WTC11 (cell line): ENCODE measurements at regions of chr15 and their contacts with region 1.

Region 1: GRCh38 chr15:81265944-81266775 is 57.8 kb downstream of the STARD5 start:
- DNase-seq: peak; percentile 90
- ATAC-seq: peak; percentile 93
- H3K4me3 Mint-ChIP-seq: peak overlapping the region; percentile 58
- H3K27ac Mint-ChIP-seq: no peak overlapping the region
- H3K4me1 Mint-ChIP-seq: peaks cover 13% of the 10 kb centered on the region
- H3K27me3 Mint-ChIP-seq: no peaks in the 10 kb centered on the region
- CTCF ChIP-seq: peak; percentile 78

Region 2: DNA sequence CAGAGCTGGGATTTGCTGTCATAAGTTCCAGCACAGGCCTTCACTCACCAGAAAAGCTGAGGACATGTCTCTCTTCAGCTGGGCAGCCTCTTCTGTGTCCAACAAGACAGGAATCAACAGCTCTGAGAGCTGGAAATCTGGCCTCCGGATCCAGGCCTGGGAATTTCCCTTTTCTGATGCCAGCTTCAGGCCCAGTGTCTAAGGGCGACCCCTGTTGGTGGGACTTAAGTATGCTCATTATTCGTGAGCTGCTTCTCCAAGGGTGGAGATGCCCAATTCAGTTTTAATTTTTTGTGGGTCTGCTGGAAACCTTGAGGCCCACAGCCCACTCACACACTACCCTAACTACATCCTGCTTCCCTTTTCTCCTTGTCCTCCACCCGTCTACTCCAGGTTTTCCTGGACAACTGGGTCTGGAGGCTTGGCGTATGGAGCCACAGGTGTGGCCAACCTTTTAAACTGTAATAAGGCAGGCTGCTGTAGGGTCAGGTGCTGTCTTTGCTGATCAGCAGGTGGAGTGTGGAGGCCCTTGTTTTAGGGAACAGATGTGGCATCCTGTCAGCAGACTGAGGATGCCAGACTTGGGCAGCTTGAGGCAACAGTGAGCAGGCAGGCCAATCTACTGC is 489.6 kb before region 1 on chr15:
- CTCF ChIA-PET with region 1: interaction called, 11 read pairs
- POLR2A ChIA-PET with region 1: no interaction called
- DNase-seq: peak; percentile 75
- ATAC-seq: no peak
- H3K4me3 Mint-ChIP-seq: no peak overlapping the region
- H3K27ac Mint-ChIP-seq: no peak overlapping the region
- H3K4me1 Mint-ChIP-seq: peaks cover 11% of the 10 kb centered on the region
- H3K27me3 Mint-ChIP-seq: peaks cover 39% of the 10 kb centered on the region
- CTCF ChIP-seq: peak; percentile 83

Region 3: DNA sequence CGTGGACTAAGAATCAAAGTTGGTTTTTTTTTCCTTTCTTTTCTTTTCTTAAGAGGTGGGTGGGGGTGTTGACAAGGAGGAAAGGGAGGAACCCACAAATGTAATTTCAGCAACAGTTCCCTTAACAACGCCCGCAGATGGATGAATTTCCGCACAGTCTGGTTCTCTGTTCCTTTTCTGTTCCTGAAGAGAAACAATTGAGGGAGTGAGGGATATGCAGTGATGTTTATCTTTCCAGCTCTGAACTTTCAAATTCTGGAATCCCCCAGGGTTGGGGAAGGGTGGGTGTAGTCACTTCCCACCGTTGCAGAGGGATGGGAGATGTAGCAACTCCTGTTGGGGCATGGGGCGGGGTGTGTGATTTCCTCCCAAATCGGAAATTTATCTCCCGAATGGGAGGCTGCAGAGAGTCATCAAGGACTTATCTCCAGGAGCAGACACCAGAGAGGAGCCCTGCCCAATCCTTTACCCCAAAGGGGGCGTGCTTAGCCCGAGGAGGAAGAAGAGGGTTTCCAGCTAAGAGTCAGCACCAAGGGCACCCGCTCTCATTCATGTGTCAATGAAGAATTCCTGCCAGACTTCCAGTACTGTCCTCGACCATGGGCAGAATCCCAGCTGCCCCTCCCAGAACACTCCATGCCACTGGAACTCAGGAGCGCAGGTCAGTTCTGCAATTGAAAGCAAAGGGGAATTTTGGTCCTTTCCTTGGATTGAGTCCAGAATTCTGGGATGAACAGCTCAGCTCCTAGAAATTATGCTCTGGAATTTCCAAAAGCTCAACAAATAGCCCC is 167.1 kb before region 1 on chr15:
- CTCF ChIA-PET with region 1: interaction called, 238 read pairs
- POLR2A ChIA-PET with region 1: no interaction called
- DNase-seq: no peak
- ATAC-seq: no peak
- H3K4me3 Mint-ChIP-seq: no peak overlapping the region
- H3K27ac Mint-ChIP-seq: no peak overlapping the region
- H3K4me1 Mint-ChIP-seq: no peaks in the 10 kb centered on the region
- H3K27me3 Mint-ChIP-seq: peaks cover 8% of the 10 kb centered on the region; the same call in 1 of the 2 replicates
- CTCF ChIP-seq: no peak

Region 4: GRCh38 chr15:81163961-81164800 is 102.0 kb before region 1 on chr15:
- CTCF ChIA-PET with region 1: interaction called, 170 read pairs
- POLR2A ChIA-PET with region 1: no interaction called
- DNase-seq: no peak
- ATAC-seq: no peak
- H3K4me3 Mint-ChIP-seq: no peak overlapping the region
- H3K27ac Mint-ChIP-seq: no peak overlapping the region
- H3K4me1 Mint-ChIP-seq: no peaks in the 10 kb centered on the region
- H3K27me3 Mint-ChIP-seq: peaks cover 4% of the 10 kb centered on the region; the same call in 1 of the 2 replicates
- CTCF ChIP-seq: no peak

Region 5: GRCh38 chr15:81216422-81216821 is 49.7 kb before region 1 on chr15:
- CTCF ChIA-PET with region 1: interaction called, 25 read pairs
- POLR2A ChIA-PET with region 1: no interaction called
- DNase-seq: peak; percentile 46
- ATAC-seq: peak; percentile 84
- H3K4me3 Mint-ChIP-seq: no peak overlapping the region
- H3K27ac Mint-ChIP-seq: no peak overlapping the region
- H3K4me1 Mint-ChIP-seq: peaks cover 6% of the 10 kb centered on the region
- H3K27me3 Mint-ChIP-seq: peaks cover 31% of the 10 kb centered on the region
- CTCF ChIP-seq: no peak

Region 6: DNA sequence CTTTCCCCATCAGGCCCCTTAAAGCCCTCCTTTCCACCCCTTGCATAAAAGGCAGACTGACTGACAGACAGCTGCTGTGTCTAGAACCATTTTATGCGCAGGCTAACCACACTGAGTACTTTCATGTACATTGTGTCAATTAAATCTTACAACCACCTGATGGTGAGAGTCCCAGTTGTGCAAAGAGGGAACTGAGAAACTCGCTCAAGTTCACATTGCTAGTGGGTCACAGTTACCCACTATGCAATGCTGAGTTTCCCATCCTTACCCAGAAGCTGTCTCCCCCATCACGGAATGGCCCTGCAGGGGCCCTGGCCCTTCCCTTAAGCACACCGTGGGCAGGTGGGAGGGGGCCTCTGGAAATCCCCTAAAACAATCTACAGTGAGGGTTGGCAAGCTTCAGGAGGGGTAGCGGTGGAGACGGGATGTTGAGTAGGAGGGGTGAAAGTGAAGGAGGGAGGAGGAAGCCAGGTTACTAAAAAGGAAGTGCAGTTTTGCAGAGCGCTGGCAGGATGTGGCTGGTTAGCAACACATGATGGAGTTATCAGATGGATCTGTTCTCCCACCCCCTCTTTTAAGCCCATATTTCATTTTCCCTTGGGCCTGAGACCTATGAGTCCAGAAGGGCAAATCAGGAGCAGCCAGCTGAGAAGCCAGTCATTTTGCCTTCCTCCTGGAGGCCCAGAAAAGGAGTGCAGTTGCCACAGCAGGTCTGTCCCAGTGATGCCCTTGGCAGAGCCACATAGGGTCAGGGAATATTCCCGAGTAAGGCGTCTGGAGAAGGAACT is 27.8 kb after region 1 on chr15:
- CTCF ChIA-PET with region 1: interaction called, 13 read pairs
- POLR2A ChIA-PET with region 1: no interaction called
- DNase-seq: no peak
- ATAC-seq: peak; percentile 36
- H3K4me3 Mint-ChIP-seq: no peak overlapping the region
- H3K27ac Mint-ChIP-seq: no peak overlapping the region
- H3K4me1 Mint-ChIP-seq: peaks cover 25% of the 10 kb centered on the region
- H3K27me3 Mint-ChIP-seq: peaks cover 8% of the 10 kb centered on the region
- CTCF ChIP-seq: no peak

Region 7: GRCh38 chr15:81394603-81395002 is 128.4 kb after region 1 on chr15:
- CTCF ChIA-PET with region 1: interaction called, 36 read pairs
- POLR2A ChIA-PET with region 1: no interaction called
- DNase-seq: no peak
- ATAC-seq: no peak
- H3K4me3 Mint-ChIP-seq: no peak overlapping the region
- H3K27ac Mint-ChIP-seq: no peak overlapping the region
- H3K4me1 Mint-ChIP-seq: no peaks in the 10 kb centered on the region
- H3K27me3 Mint-ChIP-seq: no peaks in the 10 kb centered on the region
- CTCF ChIP-seq: no peak

Region 8: GRCh38 chr15:81839387-81839786 is 573.2 kb after region 1 on chr15:
- CTCF ChIA-PET with region 1: no interaction called
- POLR2A ChIA-PET with region 1: no interaction called
- DNase-seq: no peak
- ATAC-seq: no peak
- H3K4me3 Mint-ChIP-seq: no peak overlapping the region
- H3K27ac Mint-ChIP-seq: no peak overlapping the region
- H3K4me1 Mint-ChIP-seq: no peaks in the 10 kb centered on the region
- H3K27me3 Mint-ChIP-seq: no peaks in the 10 kb centered on the region
- CTCF ChIP-seq: no peak